ENCODE measurements at regions of chr16 and their contacts with region 1.

Region 1: GRCh38 chr16:1825864-1826690 is 548 bp downstream of the HAGH start:
- DNase-seq: no peak
- H3K4me3 ChIP-seq: peak overlapping the region; percentile 76
- H3K27me3 ChIP-seq: no peaks in the 10 kb centered on the region
- CTCF ChIP-seq: no peak

Region 2: GRCh38 chr16:1677802-1678496 is 148.1 kb before region 1 on chr16 and contains the start of gene JPT2:
- CTCF ChIA-PET with region 1: no interaction called
- POLR2A ChIA-PET with region 1: no interaction called
- DNase-seq: peak; percentile 82
- H3K4me3 ChIP-seq: peak within 1 kb of the TSS; percentile 53
- H3K27me3 ChIP-seq: no peaks in the 10 kb centered on the region
- CTCF ChIP-seq: no peak
- polyA plus RNA-seq, gene JPT2: 46.2 and 47.6 TPM in 2 replicates

Region 3: GRCh38 chr16:1691276-1691675 is 134.8 kb before region 1 on chr16:
- CTCF ChIA-PET with region 1: no interaction called
- POLR2A ChIA-PET with region 1: no interaction called
- DNase-seq: no peak
- H3K4me3 ChIP-seq: no peak overlapping the region
- H3K27me3 ChIP-seq: no peaks in the 10 kb centered on the region
- CTCF ChIP-seq: peak; percentile 40

Region 4: GRCh38 chr16:1812732-1813163 is 13.3 kb before region 1 on chr16:
- CTCF ChIA-PET with region 1: interaction called, 15 read pairs
- POLR2A ChIA-PET with region 1: no interaction called
- DNase-seq: no peak
- H3K4me3 ChIP-seq: no peak overlapping the region
- H3K27me3 ChIP-seq: no peaks in the 10 kb centered on the region
- CTCF ChIP-seq: peak; percentile 74

Region 5: DNA sequence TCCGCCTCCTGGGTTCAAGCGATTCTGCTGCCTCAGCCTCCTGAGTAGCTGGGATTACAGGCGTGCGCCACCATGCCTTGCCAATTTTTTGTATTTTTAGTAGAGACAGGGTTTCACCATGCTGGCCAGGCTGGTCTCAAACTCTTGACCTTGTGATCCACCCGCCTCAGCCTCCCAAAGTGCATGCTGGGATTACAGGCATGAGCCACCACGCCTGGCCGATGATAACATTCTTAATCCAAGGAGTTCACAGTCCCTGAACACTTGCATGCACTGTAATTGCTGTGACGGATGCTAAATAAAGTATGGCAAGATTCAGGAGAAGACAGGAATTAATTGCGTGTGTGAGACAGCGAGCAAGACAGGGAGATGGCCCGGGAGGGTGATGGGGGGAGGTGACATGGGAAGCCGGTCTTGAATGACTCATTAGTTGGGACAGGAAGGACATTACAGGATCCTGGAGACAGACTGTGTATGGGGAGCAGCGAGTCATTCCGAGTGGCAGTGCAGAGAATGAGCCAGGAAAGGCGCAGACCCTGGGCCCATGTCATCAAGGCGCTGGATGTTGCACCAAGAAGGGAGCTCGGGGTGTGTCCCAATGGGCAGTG is 507.8 kb after region 1 on chr16:
- CTCF ChIA-PET with region 1: no interaction called
- POLR2A ChIA-PET with region 1: no interaction called
- DNase-seq: no peak
- H3K4me3 ChIP-seq: no peak overlapping the region
- H3K27me3 ChIP-seq: no peaks in the 10 kb centered on the region; the same call in 1 of the 2 replicates
- CTCF ChIP-seq: no peak